Activated B cell treated with CpG ODN at 0.5 μM for 24 hours (primary cell): ENCODE measurements at regions of chr1 and their contacts with region 1.

Region 1: DNA sequence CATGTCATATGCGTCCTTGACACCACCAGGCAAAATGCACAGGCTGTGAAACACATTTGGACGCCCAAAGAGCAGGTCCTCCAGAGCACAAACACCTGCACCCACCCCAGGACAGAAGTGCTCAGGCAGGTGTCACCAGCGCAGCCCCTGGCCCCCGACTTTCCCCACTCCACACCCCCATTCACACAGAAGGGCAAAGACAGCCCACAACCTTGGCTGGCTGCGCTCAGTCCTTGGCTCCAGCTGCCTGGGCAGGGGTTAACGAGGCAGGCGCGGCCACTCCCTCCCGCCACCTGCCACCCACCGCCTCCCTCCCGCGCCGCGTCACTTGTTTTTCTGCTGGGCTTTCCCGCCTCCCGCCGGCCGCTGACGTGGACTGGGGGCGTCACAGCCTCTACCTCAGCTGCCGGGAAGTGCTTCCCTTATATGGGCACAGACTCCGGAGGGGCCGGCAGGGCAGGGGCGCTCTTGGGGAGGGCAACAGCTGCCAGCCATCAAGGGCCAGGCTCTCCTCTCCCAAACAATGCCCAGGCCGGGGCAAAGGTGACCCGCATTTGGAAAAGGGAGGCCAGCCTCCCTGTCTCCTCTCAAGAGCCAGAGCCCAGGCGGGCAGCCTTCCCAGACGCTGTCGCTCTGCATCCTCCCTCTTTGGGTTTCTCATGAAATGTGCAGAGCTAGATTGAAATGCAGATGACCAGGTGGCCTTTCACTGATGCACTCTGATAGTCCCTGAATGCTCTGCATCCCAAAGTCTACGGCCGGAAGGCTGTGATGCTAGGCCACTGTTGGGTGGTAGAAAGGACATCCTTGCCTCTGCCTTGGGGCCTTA is 14.8 kb upstream of the BTG2 start:
- DNase-seq: peak; percentile 95
- ATAC-seq: peak; percentile 41
- H3K4me3 Mint-ChIP-seq: peak overlapping the region; percentile 85
- H3K27ac Mint-ChIP-seq: peak overlapping the region; percentile 100
- H3K4me1 Mint-ChIP-seq: peaks cover 95% of the 10 kb centered on the region
- H3K27me3 Mint-ChIP-seq: no peaks in the 10 kb centered on the region
- CTCF ChIP-seq: no peak

Region 2: DNA sequence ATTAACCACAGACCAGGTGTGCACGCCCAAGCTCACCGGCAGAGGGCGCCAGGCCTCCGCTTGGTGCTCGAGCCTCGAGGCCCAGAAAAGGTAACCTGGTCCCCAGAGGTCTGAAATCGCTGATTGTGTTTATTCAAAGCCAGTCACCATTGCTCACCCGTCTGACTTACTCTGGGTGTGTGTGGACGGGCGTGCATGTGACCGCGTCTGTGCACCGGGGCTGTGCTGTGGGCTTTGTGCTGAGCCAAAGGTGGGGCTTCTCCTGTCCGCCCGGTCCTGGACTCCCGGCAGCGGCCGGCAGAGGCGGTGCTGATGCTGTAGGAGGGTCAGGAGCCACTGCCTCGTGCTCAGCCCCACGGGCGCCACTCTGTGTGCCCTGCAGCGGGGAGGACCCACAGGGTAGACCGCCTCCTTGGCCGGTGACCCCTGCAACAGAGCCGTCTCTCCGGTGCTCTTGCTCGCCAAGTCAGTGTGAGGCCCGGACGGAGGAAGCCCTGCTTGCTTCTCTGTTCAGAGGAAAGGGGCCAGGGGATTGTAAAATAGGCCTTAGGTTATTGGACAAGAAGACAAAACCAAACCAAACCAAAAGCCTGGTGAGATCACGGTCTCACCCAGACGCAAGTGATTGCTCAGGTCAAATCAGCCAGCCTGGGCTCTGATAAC is 17.1 kb before region 1 on chr1:
- CTCF ChIA-PET with region 1: interaction called, 53 read pairs
- POLR2A ChIA-PET with region 1: no interaction called
- intact Hi-C with region 1: loop called (anchors 1 kb)
- DNase-seq: peak; percentile 90
- ATAC-seq: peak; percentile 78
- H3K4me3 Mint-ChIP-seq: peak overlapping the region; percentile 87
- H3K27ac Mint-ChIP-seq: peak overlapping the region; percentile 93
- H3K4me1 Mint-ChIP-seq: peaks cover 73% of the 10 kb centered on the region
- H3K27me3 Mint-ChIP-seq: no peaks in the 10 kb centered on the region
- CTCF ChIP-seq: peak; percentile 74

Region 3: GRCh38 chr1:203304919-203305808 is 14.7 kb after region 1 on chr1 and contains the start of gene BTG2:
- CTCF ChIA-PET with region 1: interaction called, 100 read pairs
- POLR2A ChIA-PET with region 1: interaction called, 1,942 read pairs
- intact Hi-C with region 1: loop called (anchors 1 kb)
- DNase-seq: peak; percentile 86
- ATAC-seq: peak; percentile 79
- H3K4me3 Mint-ChIP-seq: peak within 1 kb of the TSS; percentile 92
- H3K27ac Mint-ChIP-seq: peak within 1 kb of the TSS; percentile 98
- H3K4me1 Mint-ChIP-seq: peaks cover 70% of the 10 kb centered on the region
- H3K27me3 Mint-ChIP-seq: no peaks in the 10 kb centered on the region
- CTCF ChIP-seq: no peak
- total RNA-seq, gene BTG2: 419 and 448 TPM in 2 replicates

Region 4: DNA sequence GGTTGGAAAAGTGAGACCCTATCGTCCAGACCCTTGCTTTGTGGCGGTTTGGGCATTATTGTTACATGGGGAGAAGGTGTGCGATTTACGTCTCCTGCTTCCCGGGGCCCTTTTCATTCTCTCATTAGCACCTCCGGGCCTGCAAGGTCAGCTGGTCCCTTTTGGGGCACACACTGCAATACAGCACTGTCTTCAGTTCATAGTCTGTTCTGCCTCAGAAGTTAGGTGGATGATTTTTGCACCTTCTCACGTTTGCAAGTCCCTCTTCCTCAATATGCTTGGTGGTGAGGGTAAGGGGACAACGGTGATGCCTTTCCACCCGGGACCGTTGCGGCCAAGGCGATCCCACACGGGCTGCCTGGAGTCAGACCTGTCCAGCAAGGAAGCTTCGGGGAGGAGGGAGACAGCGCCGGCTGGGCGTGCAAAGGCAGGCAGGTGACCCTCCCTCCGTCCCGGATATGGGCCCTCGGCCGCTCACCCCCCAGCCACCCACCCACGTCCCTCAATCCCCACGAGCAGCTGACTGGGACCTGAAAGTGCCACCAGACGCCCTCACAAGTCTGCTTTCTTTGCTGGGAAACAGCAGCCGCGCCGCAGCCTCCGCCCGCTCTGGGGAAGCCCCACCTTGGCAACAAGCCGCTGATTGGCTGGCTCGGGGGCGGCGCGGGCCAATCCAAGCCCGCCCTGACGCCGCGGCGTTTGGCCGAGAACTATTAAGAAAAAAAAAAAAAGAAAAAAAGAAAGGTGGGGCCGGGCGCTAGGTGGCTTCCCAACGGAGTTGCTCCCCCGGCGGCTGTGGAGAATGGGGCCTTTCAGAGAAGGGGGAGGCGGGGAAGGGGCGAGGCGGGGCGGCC is 36.6 kb after region 1 on chr1:
- CTCF ChIA-PET with region 1: interaction called, 50 read pairs
- POLR2A ChIA-PET with region 1: interaction called, 1,136 read pairs
- intact Hi-C with region 1: loop called (anchors 1 kb)
- DNase-seq: peak; percentile 91
- ATAC-seq: peak; percentile 79
- H3K4me3 Mint-ChIP-seq: peak overlapping the region; percentile 84
- H3K27ac Mint-ChIP-seq: peak overlapping the region; percentile 96
- H3K4me1 Mint-ChIP-seq: peaks cover 77% of the 10 kb centered on the region
- H3K27me3 Mint-ChIP-seq: no peaks in the 10 kb centered on the region
- CTCF ChIP-seq: no peak

Region 5: GRCh38 chr1:203381151-203381751 is 90.8 kb after region 1 on chr1:
- CTCF ChIA-PET with region 1: no interaction called
- POLR2A ChIA-PET with region 1: interaction called, 6 read pairs
- intact Hi-C with region 1: loop called (anchors 5 kb)
- DNase-seq: no peak
- ATAC-seq: peak; percentile 89
- H3K4me3 Mint-ChIP-seq: peak overlapping the region; percentile 59
- H3K27ac Mint-ChIP-seq: peak overlapping the region; percentile 88
- H3K4me1 Mint-ChIP-seq: peaks cover 53% of the 10 kb centered on the region
- H3K27me3 Mint-ChIP-seq: no peaks in the 10 kb centered on the region
- CTCF ChIP-seq: no peak

Region 6: DNA sequence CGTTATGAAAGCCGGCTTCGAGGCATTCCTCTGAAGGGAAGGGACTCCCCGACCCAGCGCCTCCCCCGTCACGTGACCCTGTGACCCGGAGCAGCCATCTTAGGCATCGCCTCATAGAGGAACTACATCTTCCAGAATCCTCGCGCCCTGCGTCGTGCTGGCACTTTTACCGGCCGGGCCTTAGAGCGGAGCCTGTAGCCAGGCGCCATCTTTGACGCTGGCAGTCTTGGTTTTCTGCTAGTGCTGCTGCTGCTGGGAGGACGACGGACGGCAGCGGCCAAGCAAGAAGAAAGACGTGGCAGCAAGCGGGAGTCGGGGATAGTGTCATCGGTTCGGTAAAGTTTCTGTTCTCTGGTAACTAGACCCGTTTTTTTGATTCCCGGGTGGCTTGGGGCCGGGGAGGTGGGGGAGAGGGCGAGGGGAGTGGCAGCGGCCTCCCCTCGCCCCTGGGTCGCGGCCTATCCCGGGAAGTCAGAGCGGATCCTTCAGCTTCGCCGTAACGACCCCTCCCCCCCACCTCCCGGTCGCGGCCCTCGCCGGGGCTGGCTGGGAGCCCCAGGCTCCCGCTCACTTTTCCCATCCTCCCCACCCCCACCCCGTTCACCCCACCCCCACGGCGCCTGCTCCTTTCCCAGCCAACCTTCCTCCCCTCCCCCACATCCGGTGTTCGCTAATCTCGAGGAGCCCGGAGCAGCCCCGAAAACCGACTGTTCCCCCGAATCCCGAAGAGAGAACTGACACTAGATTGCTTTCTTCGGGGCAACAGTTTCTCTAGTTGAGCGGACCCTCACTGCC is 505.2 kb after region 1 on chr1 and contains the starts of genes ZBED6 and ZC3H11A:
- CTCF ChIA-PET with region 1: no interaction called
- POLR2A ChIA-PET with region 1: no interaction called
- intact Hi-C with region 1: loop called (anchors 10 kb)
- DNase-seq: peak; percentile 90
- ATAC-seq: peak; percentile 97
- H3K4me3 Mint-ChIP-seq: peak within 1 kb of the TSS; percentile 99
- H3K27ac Mint-ChIP-seq: peak within 1 kb of the TSS; percentile 95
- H3K4me1 Mint-ChIP-seq: peaks cover 51% of the 10 kb centered on the region
- H3K27me3 Mint-ChIP-seq: no peaks in the 10 kb centered on the region
- CTCF ChIP-seq: no peak
- total RNA-seq, gene ZBED6: 26.3 and 31.4 TPM in 2 replicates
- total RNA-seq, gene ZC3H11A: 85.6 and 91.6 TPM in 2 replicates

Region 7: GRCh38 chr1:204411451-204412204 is 1121.2 kb after region 1 on chr1 and contains the start of gene PPP1R15B:
- CTCF ChIA-PET with region 1: no interaction called
- POLR2A ChIA-PET with region 1: no interaction called
- intact Hi-C with region 1: loop called (anchors 5 kb)
- DNase-seq: peak; percentile 96
- ATAC-seq: peak; percentile 89
- H3K4me3 Mint-ChIP-seq: peak within 1 kb of the TSS; percentile 99
- H3K27ac Mint-ChIP-seq: peak within 1 kb of the TSS; percentile 99
- H3K4me1 Mint-ChIP-seq: peaks cover 29% of the 10 kb centered on the region
- H3K27me3 Mint-ChIP-seq: no peaks in the 10 kb centered on the region
- CTCF ChIP-seq: no peak
- total RNA-seq, gene PPP1R15B: 60.4 and 70.6 TPM in 2 replicates